ENCODE measurements at regions of chr2 and their contacts with region 1.

Region 1: GRCh38 chr2:24827321-24828237 is 34.4 kb downstream of the CENPO start:
- DNase-seq: peak; percentile 80
- ATAC-seq: peak; percentile 84
- H3K4me3 Mint-ChIP-seq: no peak overlapping the region
- H3K27ac Mint-ChIP-seq: no peak overlapping the region
- H3K4me1 Mint-ChIP-seq: peaks cover 14% of the 10 kb centered on the region
- H3K27me3 Mint-ChIP-seq: no peaks in the 10 kb centered on the region

Region 2: GRCh38 chr2:24421668-24422067 is 405.9 kb before region 1 on chr2:
- CTCF ChIA-PET with region 1: interaction called, 44 read pairs
- POLR2A ChIA-PET with region 1: no interaction called
- DNase-seq: peak; percentile 64
- ATAC-seq: no peak
- H3K4me3 Mint-ChIP-seq: no peak overlapping the region
- H3K27ac Mint-ChIP-seq: no peak overlapping the region
- H3K4me1 Mint-ChIP-seq: no peaks in the 10 kb centered on the region
- H3K27me3 Mint-ChIP-seq: peaks cover 2% of the 10 kb centered on the region

Region 3: DNA sequence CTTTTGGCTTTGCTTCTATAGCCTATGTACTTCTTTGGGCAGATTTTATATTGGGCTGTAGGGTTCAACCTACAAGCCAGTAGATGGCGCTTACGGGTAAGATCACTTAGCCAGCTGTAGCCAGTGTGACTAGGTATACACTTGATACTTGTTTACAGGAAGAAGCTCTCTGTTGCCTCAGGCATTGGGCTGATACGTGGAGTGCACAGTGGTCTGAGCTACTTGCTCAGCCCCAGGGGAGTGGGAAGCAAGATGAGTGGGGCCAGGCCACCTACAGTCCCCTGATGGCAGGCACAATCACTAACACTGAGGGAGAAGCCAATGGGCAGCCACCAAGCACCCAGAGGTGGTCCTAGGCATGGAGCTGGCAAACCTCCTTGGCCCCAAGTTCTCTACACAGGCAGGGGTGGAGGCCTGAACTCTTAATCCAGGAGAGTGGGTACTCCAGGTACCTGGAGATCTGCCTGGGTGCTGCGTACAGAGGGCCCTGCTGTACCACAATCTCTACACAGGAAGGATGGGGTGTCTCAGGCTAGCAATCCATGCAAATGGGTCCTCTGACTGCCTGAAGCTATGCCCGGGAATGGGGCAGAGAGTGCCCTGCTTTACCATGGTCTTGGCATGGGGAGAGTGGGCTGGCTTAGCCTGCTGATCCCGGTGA is 214.3 kb before region 1 on chr2:
- CTCF ChIA-PET with region 1: interaction called, 17 read pairs
- POLR2A ChIA-PET with region 1: no interaction called
- DNase-seq: peak; percentile 65
- ATAC-seq: peak; percentile 87
- H3K4me3 Mint-ChIP-seq: no peak overlapping the region
- H3K27ac Mint-ChIP-seq: peak overlapping the region; percentile 75
- H3K4me1 Mint-ChIP-seq: peaks cover 4% of the 10 kb centered on the region
- H3K27me3 Mint-ChIP-seq: no peaks in the 10 kb centered on the region

Region 4: GRCh38 chr2:24813691-24814137 is 13.9 kb before region 1 on chr2:
- CTCF ChIA-PET with region 1: interaction called, 13 read pairs
- POLR2A ChIA-PET with region 1: no interaction called
- DNase-seq: no peak
- ATAC-seq: no peak
- H3K4me3 Mint-ChIP-seq: no peak overlapping the region
- H3K27ac Mint-ChIP-seq: no peak overlapping the region
- H3K4me1 Mint-ChIP-seq: peaks cover 13% of the 10 kb centered on the region
- H3K27me3 Mint-ChIP-seq: no peaks in the 10 kb centered on the region